ENCODE measurements at regions of chr12 and their contacts with region 1.

Region 1: DNA sequence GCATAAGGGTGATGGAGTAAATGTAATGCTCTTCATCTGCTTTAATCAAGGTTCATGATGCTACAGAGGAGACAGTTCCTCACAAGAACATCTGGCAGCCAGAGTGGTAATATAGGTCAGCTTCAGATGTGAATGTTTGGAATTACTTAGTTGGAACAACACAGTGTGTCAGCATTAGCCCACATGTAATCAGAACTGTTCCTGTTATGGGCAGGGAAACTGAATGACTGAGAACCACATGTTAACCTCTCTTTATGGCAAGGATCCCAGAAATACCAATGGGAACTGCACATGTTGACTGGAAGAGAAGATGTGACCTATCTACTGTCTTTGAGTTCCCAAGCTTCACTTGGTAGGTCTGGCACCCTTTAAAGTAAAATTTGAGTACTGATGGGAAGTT is 390.1 kb upstream of the PDE3A start:
- DNase-seq: no peak
- H3K4me3 ChIP-seq: no peak overlapping the region
- H3K27ac ChIP-seq: no peak overlapping the region
- H3K4me1 ChIP-seq: no peaks in the 10 kb centered on the region
- H3K27me3 ChIP-seq: no peaks in the 10 kb centered on the region
- CTCF ChIP-seq: no peak

Region 2: GRCh38 chr12:19369691-19370148 is 608.5 kb before region 1 on chr12:
- CTCF ChIA-PET with region 1: no interaction called
- POLR2A ChIA-PET with region 1: no interaction called
- intact Hi-C with region 1: no loop called
- DNase-seq: no peak
- H3K4me3 ChIP-seq: no peak overlapping the region
- H3K27ac ChIP-seq: no peak overlapping the region
- H3K4me1 ChIP-seq: no peaks in the 10 kb centered on the region
- H3K27me3 ChIP-seq: no peaks in the 10 kb centered on the region
- CTCF ChIP-seq: no peak

Region 3: GRCh38 chr12:20701093-20701492 is 722.9 kb after region 1 on chr12:
- CTCF ChIA-PET with region 1: interaction called, 13 read pairs
- POLR2A ChIA-PET with region 1: no interaction called
- intact Hi-C with region 1: no loop called
- DNase-seq: no peak
- H3K4me3 ChIP-seq: no peak overlapping the region
- H3K27ac ChIP-seq: no peak overlapping the region
- H3K4me1 ChIP-seq: no peaks in the 10 kb centered on the region
- H3K27me3 ChIP-seq: no peaks in the 10 kb centered on the region
- CTCF ChIP-seq: no peak

Measured in PC-9 (cell line).